ENCODE measurements at regions of chr2 and their contacts with region 1.

Region 1: GRCh38 chr2:170598067-170598395 is 117.1 kb upstream of the SP5 start:
- DNase-seq: peak; percentile 81
- H3K4me3 ChIP-seq: no peak overlapping the region
- H3K27ac ChIP-seq: peak overlapping the region; percentile 22 to 61 (median 38)
- H3K4me1 ChIP-seq: peaks cover 0 to 24% (median 6%) of the 10 kb centered on the region in 4 donors
- H3K27me3 ChIP-seq: no peaks in the 10 kb centered on the region
- CTCF ChIP-seq: no peak
- EP300 ChIP-seq: no peak
- POLR2A ChIP-seq: no peak

Region 2: GRCh38 chr2:170505631-170506275 is 92.3 kb before region 1 on chr2:
- intact Hi-C with region 1: loop called (anchors 10 kb)
- DNase-seq: peak; percentile 94
- H3K4me3 ChIP-seq: peak overlapping the region in 3 of 4 donors; percentile 0 to 22 (median 4)
- H3K27ac ChIP-seq: peak overlapping the region; percentile 27 to 70 (median 44)
- H3K4me1 ChIP-seq: peaks cover 0 to 41% (median 20%) of the 10 kb centered on the region in 4 donors
- H3K27me3 ChIP-seq: no peaks in the 10 kb centered on the region
- CTCF ChIP-seq: no peak
- EP300 ChIP-seq: no peak
- POLR2A ChIP-seq: no peak

Measured in sigmoid colon (tissue), 7 donors.